ENCODE measurements at regions of chr7 and their contacts with region 1.

Region 1: GRCh38 chr7:1354661-1355221 is 104.5 kb downstream of the MICALL2 start:
- DNase-seq: no peak
- H3K4me3 ChIP-seq: no peak overlapping the region
- H3K27ac ChIP-seq: no peak overlapping the region
- H3K4me1 ChIP-seq: no peaks in the 10 kb centered on the region
- H3K27me3 ChIP-seq: peaks cover 0 to 36% of the 10 kb centered on the region in 2 donors
- CTCF ChIP-seq: no peak
- POLR2A ChIP-seq: no peak

Region 2: DNA sequence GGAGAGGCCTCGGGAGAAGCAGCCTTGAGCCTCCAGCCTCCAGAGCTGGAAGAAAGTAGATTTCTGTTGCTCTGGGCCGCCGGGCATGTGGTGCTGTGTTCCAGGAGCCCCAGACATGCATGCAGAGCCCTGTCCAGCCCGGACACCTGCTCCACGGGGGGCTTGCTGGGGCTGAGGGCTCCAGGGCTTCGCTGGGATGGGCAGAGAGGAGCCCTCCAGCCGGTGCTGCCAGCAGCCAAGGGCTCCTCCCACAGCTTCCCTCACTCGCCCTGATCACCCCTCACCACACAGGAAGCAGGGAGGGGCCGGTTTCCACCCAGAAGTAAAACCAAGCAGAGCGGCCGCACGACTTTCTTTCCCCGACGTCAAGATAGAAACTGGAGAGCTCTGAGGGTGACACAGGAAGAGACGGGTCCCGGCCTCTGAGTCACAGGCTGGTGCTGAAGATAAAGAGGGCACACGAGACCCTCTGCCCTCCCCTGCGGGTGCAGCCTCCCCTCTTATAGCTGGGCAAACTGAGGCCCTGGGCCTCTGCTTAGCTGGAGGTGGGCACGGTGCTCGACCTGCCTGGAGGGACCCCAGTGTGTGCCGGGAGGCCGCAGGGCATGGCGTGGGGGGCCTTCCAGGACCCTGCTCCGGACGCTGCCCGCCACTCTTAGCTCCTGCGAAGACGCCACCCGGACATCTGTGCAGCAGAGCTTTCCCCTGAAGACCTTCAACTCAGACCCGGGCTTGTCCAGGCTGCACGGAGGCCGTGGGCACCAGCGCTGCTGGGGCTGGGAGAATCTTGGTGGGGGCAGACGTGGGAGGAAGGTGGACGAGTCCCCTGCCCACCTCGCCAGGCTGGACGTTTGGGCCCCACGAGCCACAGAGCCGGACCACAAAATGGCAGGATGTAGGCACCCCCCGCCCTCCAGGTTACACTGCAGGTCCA is 431.4 kb before region 1 on chr7:
- intact Hi-C with region 1: loop called (anchors 5 kb)
- DNase-seq: peak; percentile 34 to 53
- H3K4me3 ChIP-seq: peak overlapping the region in 1 of 3 donors; percentile 15
- H3K27ac ChIP-seq: peak overlapping the region in 1 of 2 donors; percentile 52
- H3K4me1 ChIP-seq: no peaks in the 10 kb centered on the region
- H3K27me3 ChIP-seq: no peaks in the 10 kb centered on the region
- CTCF ChIP-seq: no peak
- POLR2A ChIP-seq: no peak

Region 3: DNA sequence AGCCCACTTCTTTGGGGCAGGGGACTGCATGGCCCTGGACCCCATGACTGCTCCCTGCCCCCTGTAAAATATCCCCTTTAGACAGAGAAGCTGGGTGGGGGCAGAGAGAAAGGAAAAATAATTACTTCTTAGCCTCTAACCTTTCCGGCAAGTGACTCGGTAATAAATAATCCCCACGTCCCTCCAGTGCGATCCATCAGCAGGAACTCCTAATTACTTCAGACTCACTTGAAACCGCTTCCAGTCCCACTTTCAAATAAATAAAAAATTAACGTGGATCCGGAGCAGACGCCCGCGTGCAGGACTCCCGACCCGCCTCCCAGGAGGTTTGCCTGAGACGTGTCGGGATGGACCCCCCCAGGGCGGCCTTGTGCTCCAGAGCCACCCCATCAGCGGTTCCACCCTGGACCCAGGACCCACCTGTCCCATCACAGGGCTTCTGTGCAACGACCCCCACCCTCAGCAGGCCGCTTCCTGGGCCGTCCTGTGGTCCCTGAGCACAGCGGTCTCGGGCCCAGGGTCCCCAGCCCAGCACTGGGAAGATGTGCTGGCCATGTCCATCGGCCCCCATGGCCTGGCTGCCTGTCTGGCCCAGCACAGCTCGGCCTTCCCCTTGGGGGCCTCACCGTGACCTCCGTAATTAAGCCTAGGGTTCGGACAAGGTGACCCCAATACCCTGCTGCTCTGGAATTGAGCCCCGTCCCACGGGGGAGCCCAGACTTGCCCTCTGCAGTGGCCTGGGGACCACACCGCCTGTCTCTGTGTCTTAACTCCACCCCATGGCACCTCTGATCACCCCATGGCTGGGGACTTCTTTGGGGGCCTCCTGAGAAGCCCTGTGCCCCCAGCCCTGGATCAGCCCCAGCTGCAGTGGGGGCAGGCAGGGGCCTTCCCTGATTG is 14.0 kb before region 1 on chr7:
- intact Hi-C with region 1: no loop called
- DNase-seq: no peak
- H3K4me3 ChIP-seq: no peak overlapping the region
- H3K27ac ChIP-seq: no peak overlapping the region
- H3K4me1 ChIP-seq: no peaks in the 10 kb centered on the region
- H3K27me3 ChIP-seq: peaks cover 0 to 35% of the 10 kb centered on the region in 2 donors
- CTCF ChIP-seq: no peak
- POLR2A ChIP-seq: no peak

Region 4: DNA sequence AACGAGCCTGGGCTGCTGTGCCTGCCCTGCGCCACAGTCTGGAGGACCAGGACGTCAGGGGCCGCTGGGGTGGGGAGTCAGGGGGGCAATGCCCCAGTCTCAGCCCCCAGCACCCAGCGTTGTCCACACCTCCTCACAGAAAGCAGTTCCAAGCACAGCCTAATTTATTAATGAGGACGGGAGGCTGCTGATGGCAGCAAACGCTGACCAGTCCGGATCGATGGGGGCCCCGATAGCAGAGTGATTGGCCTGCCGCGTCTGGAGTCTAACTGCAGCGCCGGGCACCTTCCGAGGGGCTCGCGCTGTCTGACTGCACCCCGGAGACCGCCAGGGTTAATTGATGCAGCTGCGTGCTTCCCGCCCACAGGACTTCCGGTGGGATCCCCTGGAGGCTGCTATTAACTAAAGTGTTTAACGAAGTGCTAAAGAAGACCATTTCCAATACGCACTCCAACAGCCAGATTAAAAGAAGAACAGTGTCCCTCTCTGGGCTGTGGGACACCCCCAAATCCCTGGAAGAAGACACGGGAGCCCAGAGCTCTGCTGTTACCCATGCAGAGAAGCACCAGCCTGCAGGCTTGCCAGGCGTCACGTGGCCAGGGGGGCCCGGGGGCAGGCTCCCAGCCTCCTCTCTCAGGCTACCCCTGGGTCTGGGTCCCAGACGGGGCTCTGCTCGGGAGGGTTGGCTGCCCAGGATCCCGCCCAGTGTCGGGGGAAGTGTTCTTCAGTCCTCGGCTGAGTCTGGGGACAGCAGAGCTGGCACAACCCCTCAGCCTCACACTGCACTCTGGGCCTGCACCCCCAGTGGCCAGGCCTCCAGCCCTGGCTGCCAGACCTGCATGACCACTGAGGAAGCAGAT is 40.7 kb after region 1 on chr7:
- intact Hi-C with region 1: loop called (anchors 1 kb)
- DNase-seq: no peak
- H3K4me3 ChIP-seq: no peak overlapping the region
- H3K27ac ChIP-seq: no peak overlapping the region
- H3K4me1 ChIP-seq: no peaks in the 10 kb centered on the region
- H3K27me3 ChIP-seq: peaks cover 0 to 47% of the 10 kb centered on the region in 2 donors
- CTCF ChIP-seq: no peak
- POLR2A ChIP-seq: no peak